MCF 10A (cell line): ENCODE measurements at regions of chr2 and their contacts with region 1.

Region 1: GRCh38 chr2:102520028-102520427 is 47.0 kb downstream of the SLC9A4 start:
- DNase-seq: peak; percentile 54
- H3K4me3 Mint-ChIP-seq: no peak overlapping the region
- H3K27ac Mint-ChIP-seq: no peak overlapping the region
- H3K4me1 Mint-ChIP-seq: peaks cover 1% of the 10 kb centered on the region
- H3K27me3 Mint-ChIP-seq: no peaks in the 10 kb centered on the region
- CTCF ChIP-seq: peak; percentile 64

Region 2: GRCh38 chr2:102578376-102578775 is 58.3 kb after region 1 on chr2:
- CTCF ChIA-PET with region 1: no interaction called
- POLR2A ChIA-PET with region 1: no interaction called
- intact Hi-C with region 1: no loop called
- DNase-seq: no peak
- H3K4me3 Mint-ChIP-seq: no peak overlapping the region
- H3K27ac Mint-ChIP-seq: no peak overlapping the region
- H3K4me1 Mint-ChIP-seq: no peaks in the 10 kb centered on the region
- H3K27me3 Mint-ChIP-seq: no peaks in the 10 kb centered on the region
- CTCF ChIP-seq: no peak

Region 3: DNA sequence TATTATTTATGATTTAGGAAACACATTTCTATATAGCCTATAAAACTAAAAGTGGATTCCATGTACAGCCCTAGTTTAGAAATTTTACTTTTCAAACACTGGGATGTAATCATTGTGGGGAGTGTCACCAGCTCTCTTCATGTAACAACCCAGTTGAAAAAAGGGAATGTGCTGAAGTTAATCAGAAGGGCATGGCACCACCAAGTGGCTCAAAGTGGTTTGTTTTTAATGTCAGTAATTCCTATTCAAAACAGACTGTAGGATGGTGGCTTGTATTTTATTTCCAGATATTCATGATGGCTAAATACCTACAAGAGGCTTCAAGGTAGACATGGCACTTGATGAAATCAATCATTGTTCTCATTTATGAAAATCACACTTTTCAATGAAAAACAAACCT is 183.7 kb after region 1 on chr2:
- CTCF ChIA-PET with region 1: interaction called, 10 read pairs
- POLR2A ChIA-PET with region 1: no interaction called
- intact Hi-C with region 1: loop called (anchors 1 kb)
- DNase-seq: peak; percentile 35
- H3K4me3 Mint-ChIP-seq: no peak overlapping the region
- H3K27ac Mint-ChIP-seq: no peak overlapping the region
- H3K4me1 Mint-ChIP-seq: peaks cover under 1% of the 10 kb centered on the region
- H3K27me3 Mint-ChIP-seq: no peaks in the 10 kb centered on the region
- CTCF ChIP-seq: peak; percentile 53